ENCODE measurements at regions of chr1 and their contacts with region 1.

Region 1: GRCh38 chr1:224368409-224368808 is 11.7 kb downstream of the CNIH4 start:
- DNase-seq: peak; percentile 40
- ATAC-seq: peak; percentile 86
- H3K4me3 ChIP-seq: no peak overlapping the region
- H3K27ac ChIP-seq: peak overlapping the region; percentile 32; the same call in 1 of the 2 replicates
- H3K4me1 ChIP-seq: peaks cover 30% of the 10 kb centered on the region
- H3K27me3 ChIP-seq: no peaks in the 10 kb centered on the region
- CTCF ChIP-seq: no peak
- EP300 ChIP-seq: no peak
- POLR2A ChIP-seq: no peak
- RAD21 ChIP-seq: no peak

Region 2: GRCh38 chr1:224356685-224357625 is 11.5 kb before region 1 on chr1 and contains the start of gene CNIH4:
- CTCF ChIA-PET with region 1: interaction called, 6 read pairs
- POLR2A ChIA-PET with region 1: interaction called, 13 read pairs
- RAD21 ChIA-PET with region 1: interaction called, 5 read pairs
- SMC1A ChIA-PET with region 1: interaction called, 17 read pairs
- in situ Hi-C with region 1: no loop called
- intact Hi-C with region 1: no loop called
- DNase-seq: peak; percentile 79
- ATAC-seq: peak; percentile 98
- H3K4me3 ChIP-seq: peak within 1 kb of the TSS; percentile 85
- H3K27ac ChIP-seq: peak within 1 kb of the TSS; percentile 30; the same call in 1 of the 2 replicates
- H3K4me1 ChIP-seq: no peaks in the 10 kb centered on the region
- H3K27me3 ChIP-seq: no peaks in the 10 kb centered on the region
- CTCF ChIP-seq: no peak
- EP300 ChIP-seq: no peak
- POLR2A ChIP-seq: peak; percentile 95
- RAD21 ChIP-seq: no peak
- polyA plus RNA-seq, gene CNIH4: 134 to 173 TPM

Region 3: GRCh38 chr1:224387302-224387912 is 19.0 kb after region 1 on chr1:
- CTCF ChIA-PET with region 1: interaction called, 3 read pairs
- POLR2A ChIA-PET with region 1: interaction called, 3 read pairs
- RAD21 ChIA-PET with region 1: no interaction called
- SMC1A ChIA-PET with region 1: interaction called, 10 read pairs
- in situ Hi-C with region 1: no loop called
- intact Hi-C with region 1: no loop called
- DNase-seq: no peak
- ATAC-seq: no peak; the same call in 2 of the 3 replicates
- H3K4me3 ChIP-seq: no peak overlapping the region
- H3K27ac ChIP-seq: no peak overlapping the region
- H3K4me1 ChIP-seq: no peaks in the 10 kb centered on the region
- H3K27me3 ChIP-seq: no peaks in the 10 kb centered on the region
- CTCF ChIP-seq: no peak
- EP300 ChIP-seq: no peak
- POLR2A ChIP-seq: no peak
- RAD21 ChIP-seq: no peak